Activated naive CD4-positive, alpha-beta T cell treated with anti-CD3 and anti-CD28 coated beads for 36 hours (primary cell): ENCODE measurements at regions of chr6 and their contacts with region 1.

Region 1: GRCh38 chr6:14857501-14857900 is 388.4 kb upstream of the JARID2 start:
- DNase-seq: peak; percentile 79
- H3K4me3 Mint-ChIP-seq: peak overlapping the region; percentile 36
- H3K27ac Mint-ChIP-seq: peak overlapping the region; percentile 91
- H3K4me1 Mint-ChIP-seq: peaks cover 28% of the 10 kb centered on the region
- H3K27me3 Mint-ChIP-seq: no peaks in the 10 kb centered on the region

Region 2: GRCh38 chr6:14799928-14800327 is 57.6 kb before region 1 on chr6:
- CTCF ChIA-PET with region 1: no interaction called
- intact Hi-C with region 1: no loop called
- DNase-seq: peak; percentile 43
- H3K4me3 Mint-ChIP-seq: no peak overlapping the region
- H3K27ac Mint-ChIP-seq: no peak overlapping the region
- H3K4me1 Mint-ChIP-seq: peaks cover 9% of the 10 kb centered on the region
- H3K27me3 Mint-ChIP-seq: no peaks in the 10 kb centered on the region

Region 3: DNA sequence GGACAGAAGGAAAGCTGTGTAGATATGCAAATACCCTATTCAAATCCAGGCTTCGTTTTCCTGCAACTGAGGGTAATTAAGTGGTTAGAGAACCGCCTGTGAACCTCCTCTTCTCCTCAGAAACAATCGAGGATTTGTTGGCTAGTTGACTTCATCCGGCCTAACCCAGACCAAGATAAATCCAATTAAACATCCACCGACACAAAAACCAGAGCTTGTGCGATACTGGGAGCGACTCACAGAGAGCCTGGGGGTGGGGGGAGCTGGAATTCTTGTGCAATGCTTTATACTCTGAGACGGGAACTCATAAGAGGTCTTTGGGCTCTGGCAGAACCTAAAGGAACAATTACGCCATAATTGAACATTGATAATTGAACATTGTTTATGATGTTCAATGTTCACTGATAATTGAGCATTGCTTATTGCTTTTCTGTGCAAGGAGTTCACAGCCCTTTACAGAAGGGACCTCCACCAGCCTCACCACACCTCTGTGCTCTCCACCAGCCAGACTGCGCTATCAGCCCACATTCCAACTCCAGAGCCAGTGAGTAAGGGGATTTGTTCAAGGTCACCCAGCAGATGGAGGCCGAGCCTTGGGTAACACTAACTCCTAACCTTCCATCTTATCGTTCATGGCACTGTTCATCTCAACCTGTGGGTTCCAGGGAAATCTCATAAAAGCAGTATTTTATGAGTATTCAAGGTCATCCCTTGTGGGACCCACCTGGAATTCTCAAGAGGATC is 41.2 kb before region 1 on chr6:
- CTCF ChIA-PET with region 1: no interaction called
- intact Hi-C with region 1: loop called (anchors 2 kb)
- DNase-seq: no peak
- H3K4me3 Mint-ChIP-seq: no peak overlapping the region
- H3K27ac Mint-ChIP-seq: no peak overlapping the region
- H3K4me1 Mint-ChIP-seq: peaks cover 10% of the 10 kb centered on the region
- H3K27me3 Mint-ChIP-seq: no peaks in the 10 kb centered on the region

Region 4: GRCh38 chr6:14964515-14965270 is 107.2 kb after region 1 on chr6:
- CTCF ChIA-PET with region 1: no interaction called
- intact Hi-C with region 1: no loop called
- DNase-seq: no peak
- H3K4me3 Mint-ChIP-seq: no peak overlapping the region
- H3K27ac Mint-ChIP-seq: no peak overlapping the region
- H3K4me1 Mint-ChIP-seq: no peaks in the 10 kb centered on the region
- H3K27me3 Mint-ChIP-seq: peaks cover 2% of the 10 kb centered on the region

Region 5: DNA sequence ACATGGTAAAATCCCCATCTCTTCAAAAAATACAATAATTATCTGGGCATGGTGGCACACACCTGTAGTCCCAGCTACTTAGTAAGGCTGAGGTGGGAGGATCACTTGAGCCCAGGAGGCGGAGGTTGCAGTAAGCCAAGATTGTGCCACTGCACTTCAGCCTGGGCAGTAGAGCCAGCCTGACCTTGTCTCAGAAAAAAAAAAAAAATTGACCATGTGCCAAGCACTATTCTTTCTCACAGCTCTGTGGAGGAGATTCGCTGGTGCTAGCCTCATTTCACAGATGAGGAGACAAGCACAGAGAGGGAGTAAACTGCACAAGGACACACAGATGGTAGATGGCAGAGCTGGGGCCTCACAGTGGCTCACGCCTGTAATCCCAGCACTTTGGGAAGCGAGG is 256.6 kb after region 1 on chr6:
- CTCF ChIA-PET with region 1: no interaction called
- intact Hi-C with region 1: no loop called
- DNase-seq: no peak
- H3K4me3 Mint-ChIP-seq: no peak overlapping the region
- H3K27ac Mint-ChIP-seq: no peak overlapping the region
- H3K4me1 Mint-ChIP-seq: no peaks in the 10 kb centered on the region
- H3K27me3 Mint-ChIP-seq: no peaks in the 10 kb centered on the region